ENCODE measurements at regions of chr1 and their contacts with region 1.

Region 1: GRCh38 chr1:33472349-33472980 is at the start of gene ZSCAN20:
- DNase-seq: peak; percentile 99

Region 2: GRCh38 chr1:33295450-33296081 is 176.9 kb before region 1 on chr1:
- CTCF ChIA-PET with region 1: interaction called, 27 read pairs
- POLR2A ChIA-PET with region 1: interaction called, 5 read pairs
- DNase-seq: peak; percentile 96

Region 3: DNA sequence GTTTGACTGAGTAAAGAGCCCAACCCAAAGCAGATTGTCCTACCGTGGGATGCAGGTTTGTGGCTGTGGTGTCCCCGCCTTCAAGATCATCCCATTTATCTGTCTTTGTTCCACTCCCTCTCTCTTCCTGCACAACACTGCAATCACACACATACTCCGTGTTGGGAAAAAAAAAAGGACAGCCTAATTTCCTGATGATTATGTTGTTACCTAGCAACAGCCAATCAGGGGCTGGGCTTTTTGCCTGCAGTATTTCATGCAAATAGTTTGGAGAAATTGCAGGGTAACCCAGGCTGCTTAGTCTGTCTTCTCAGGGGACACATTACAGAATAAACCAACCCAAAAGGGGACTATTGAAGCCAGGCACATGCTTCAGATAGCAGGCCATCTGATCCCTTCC is 79.8 kb before region 1 on chr1:
- CTCF ChIA-PET with region 1: no interaction called
- POLR2A ChIA-PET with region 1: no interaction called
- DNase-seq: no peak

Region 4: DNA sequence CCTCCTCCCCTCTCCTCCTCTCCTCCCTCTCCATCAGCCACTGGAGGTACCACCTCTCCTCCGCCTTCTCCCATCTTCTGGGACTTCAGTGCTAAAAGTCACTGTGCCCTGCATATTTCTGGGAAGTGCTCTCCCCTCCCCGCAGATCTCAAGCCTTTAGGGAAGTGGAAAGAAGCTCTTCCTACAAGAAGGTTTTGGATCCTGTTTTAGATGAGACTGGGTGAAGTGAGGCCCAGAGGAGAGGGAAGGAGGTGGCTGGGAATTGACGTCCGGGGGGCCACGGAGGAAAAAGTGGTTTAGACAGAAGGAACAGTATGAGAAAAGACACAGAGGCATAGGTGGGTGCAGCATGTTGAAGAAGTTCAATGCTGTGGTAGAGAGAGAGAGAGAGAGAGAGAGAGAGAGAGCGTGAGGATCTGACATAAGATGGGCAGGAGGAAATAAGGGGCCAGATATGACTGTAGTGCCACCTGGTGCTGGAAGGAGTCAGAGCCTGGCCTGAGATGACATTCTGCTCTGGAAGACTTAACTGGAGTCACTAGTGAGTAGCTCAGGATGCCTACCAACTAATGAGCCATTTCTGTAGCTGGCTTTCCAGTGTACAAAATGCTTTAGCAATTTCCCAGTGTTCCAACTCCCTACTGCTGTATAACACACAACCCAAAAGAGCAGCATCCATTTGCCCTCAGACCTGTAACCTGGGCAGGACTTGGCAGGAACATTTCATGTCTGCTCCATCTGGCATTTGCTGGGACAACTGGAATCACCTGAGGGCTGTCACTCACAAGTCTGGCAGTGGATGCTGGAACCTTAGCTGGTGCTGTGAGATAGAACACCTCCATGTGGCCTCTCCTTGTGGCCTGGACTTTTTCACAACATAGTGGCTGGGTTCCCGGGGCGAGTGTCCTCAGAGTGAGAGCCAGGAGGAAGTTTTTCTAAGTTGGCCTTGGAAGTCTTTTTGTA is 16.6 kb before region 1 on chr1:
- CTCF ChIA-PET with region 1: interaction called, 11 read pairs
- POLR2A ChIA-PET with region 1: interaction called, 4 read pairs
- DNase-seq: peak; percentile 83

Region 5: GRCh38 chr1:33488633-33489032 is 16.2 kb after region 1 on chr1:
- CTCF ChIA-PET with region 1: no interaction called
- POLR2A ChIA-PET with region 1: no interaction called
- DNase-seq: no peak